Psoas muscle (tissue), 8 donors: ENCODE measurements at regions of chr3 and their contacts with region 1.

Region 1: DNA sequence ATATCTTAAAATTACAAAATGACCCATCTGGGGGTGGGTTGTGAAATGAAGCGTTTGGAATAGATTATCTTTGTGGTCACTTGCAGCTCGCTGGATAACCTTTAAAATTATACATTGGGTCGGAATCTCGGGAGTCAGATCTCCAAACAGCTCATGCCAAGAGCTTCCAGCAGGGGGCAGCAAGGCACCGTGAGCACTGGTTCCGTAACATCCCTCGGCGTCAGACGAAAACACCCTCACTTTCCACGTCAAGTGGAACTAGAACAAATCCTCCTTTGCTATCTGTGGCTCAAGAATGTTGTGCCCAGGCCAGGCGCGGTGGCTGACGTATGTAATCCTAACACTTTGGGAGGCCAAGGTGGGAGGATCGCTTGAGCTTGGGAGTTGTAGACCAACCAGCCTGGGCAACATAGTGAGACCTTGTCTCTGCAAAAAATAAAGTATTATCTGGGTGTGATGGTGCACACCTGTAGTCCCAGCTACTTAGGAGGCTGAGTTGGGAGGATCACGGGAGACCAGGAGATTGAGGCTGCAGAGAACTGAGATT is 31.1 kb downstream of the UMPS start:
- DNase-seq: peak; percentile 86 to 92
- ATAC-seq: peak; percentile 87 to 96 (median 92)
- H3K4me3 ChIP-seq: no peak overlapping the region
- H3K27ac ChIP-seq: peak overlapping the region; percentile 50
- H3K4me1 ChIP-seq: peaks cover 8% of the 10 kb centered on the region
- H3K27me3 ChIP-seq: no peaks in the 10 kb centered on the region
- CTCF ChIP-seq: peak; percentile 97

Region 2: GRCh38 chr3:124791639-124792151 is 30.4 kb after region 1 on chr3:
- intact Hi-C with region 1: no loop called
- DNase-seq: peak; percentile 43 to 63
- ATAC-seq: peak; percentile 41 to 64 (median 54)
- H3K4me3 ChIP-seq: no peak overlapping the region
- H3K27ac ChIP-seq: peak overlapping the region; percentile 46
- H3K4me1 ChIP-seq: peaks cover 20% of the 10 kb centered on the region
- H3K27me3 ChIP-seq: peaks cover 0 to 1% (median 0%) of the 10 kb centered on the region in 3 donors
- CTCF ChIP-seq: no peak

Region 3: GRCh38 chr3:124905849-124906248 is 144.5 kb after region 1 on chr3:
- intact Hi-C with region 1: loop called (anchors 1 kb)
- DNase-seq: no peak
- ATAC-seq: no peak
- H3K4me3 ChIP-seq: no peak overlapping the region
- H3K27ac ChIP-seq: no peak overlapping the region
- H3K4me1 ChIP-seq: no peaks in the 10 kb centered on the region
- H3K27me3 ChIP-seq: peaks cover 0 to 2% (median 0%) of the 10 kb centered on the region in 3 donors
- CTCF ChIP-seq: no peak

Region 4: GRCh38 chr3:124986158-124987143 is 225.1 kb after region 1 on chr3:
- intact Hi-C with region 1: loop called in 1 of 2 experiments (anchors 2 kb)
- DNase-seq: no peak
- ATAC-seq: peak; percentile 21 to 56 (median 38)
- H3K4me3 ChIP-seq: no peak overlapping the region
- H3K27ac ChIP-seq: no peak overlapping the region
- H3K4me1 ChIP-seq: no peaks in the 10 kb centered on the region
- H3K27me3 ChIP-seq: no peaks in the 10 kb centered on the region
- CTCF ChIP-seq: peak; percentile 40